ENCODE measurements at regions of chr19 and their contacts with region 1.

Region 1: DNA sequence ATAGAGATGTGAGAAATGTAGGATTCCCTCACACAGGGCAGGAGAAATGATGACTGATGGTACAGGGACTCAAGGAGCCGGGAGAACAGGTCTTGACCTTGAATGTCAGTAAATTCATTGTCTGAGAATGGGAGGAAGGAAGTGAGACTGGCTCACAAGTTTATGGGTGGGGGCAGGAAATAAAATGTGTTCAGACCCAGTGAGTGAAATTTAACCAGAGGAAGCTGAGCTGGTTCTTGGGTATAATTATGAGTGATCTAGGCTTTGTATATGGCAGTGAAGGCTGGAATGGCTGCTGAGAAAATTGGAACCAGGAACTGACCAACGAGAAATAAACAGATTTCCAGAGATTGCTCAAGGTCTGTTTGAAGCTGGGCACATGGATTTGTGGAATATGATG is 6.3 kb upstream of the IGSF23 start:
- DNase-seq: no peak
- ATAC-seq: no peak
- H3K4me3 ChIP-seq: no peak overlapping the region
- H3K27ac ChIP-seq: no peak overlapping the region
- H3K4me1 ChIP-seq: peaks cover 71% of the 10 kb centered on the region
- H3K27me3 ChIP-seq: no peaks in the 10 kb centered on the region
- CTCF ChIP-seq: no peak
- EP300 ChIP-seq: no peak
- POLR2A ChIP-seq: no peak
- RAD21 ChIP-seq: no peak

Region 2: GRCh38 chr19:44576843-44577565 is 30.0 kb before region 1 on chr19:
- CTCF ChIA-PET with region 1: interaction called, 4 read pairs
- POLR2A ChIA-PET with region 1: no interaction called
- in situ Hi-C with region 1: no loop called
- intact Hi-C with region 1: loop called (anchors 5 kb)
- DNase-seq: peak; percentile 65
- ATAC-seq: peak; percentile 87
- H3K4me3 ChIP-seq: no peak overlapping the region
- H3K27ac ChIP-seq: no peak overlapping the region
- H3K4me1 ChIP-seq: peaks cover 28% of the 10 kb centered on the region
- H3K27me3 ChIP-seq: no peaks in the 10 kb centered on the region
- CTCF ChIP-seq: peak; percentile 90
- EP300 ChIP-seq: no peak
- POLR2A ChIP-seq: no peak
- RAD21 ChIP-seq: peak; percentile 82

Region 3: GRCh38 chr19:44592441-44592890 is 14.6 kb before region 1 on chr19:
- CTCF ChIA-PET with region 1: no interaction called
- POLR2A ChIA-PET with region 1: interaction called, 35 read pairs
- in situ Hi-C with region 1: no loop called
- intact Hi-C with region 1: no loop called
- DNase-seq: no peak
- ATAC-seq: no peak
- H3K4me3 ChIP-seq: no peak overlapping the region
- H3K27ac ChIP-seq: no peak overlapping the region
- H3K4me1 ChIP-seq: peaks cover 77% of the 10 kb centered on the region
- H3K27me3 ChIP-seq: no peaks in the 10 kb centered on the region; a peak in 1 of 5 replicates
- CTCF ChIP-seq: no peak
- EP300 ChIP-seq: no peak
- POLR2A ChIP-seq: no peak
- RAD21 ChIP-seq: no peak

Region 4: DNA sequence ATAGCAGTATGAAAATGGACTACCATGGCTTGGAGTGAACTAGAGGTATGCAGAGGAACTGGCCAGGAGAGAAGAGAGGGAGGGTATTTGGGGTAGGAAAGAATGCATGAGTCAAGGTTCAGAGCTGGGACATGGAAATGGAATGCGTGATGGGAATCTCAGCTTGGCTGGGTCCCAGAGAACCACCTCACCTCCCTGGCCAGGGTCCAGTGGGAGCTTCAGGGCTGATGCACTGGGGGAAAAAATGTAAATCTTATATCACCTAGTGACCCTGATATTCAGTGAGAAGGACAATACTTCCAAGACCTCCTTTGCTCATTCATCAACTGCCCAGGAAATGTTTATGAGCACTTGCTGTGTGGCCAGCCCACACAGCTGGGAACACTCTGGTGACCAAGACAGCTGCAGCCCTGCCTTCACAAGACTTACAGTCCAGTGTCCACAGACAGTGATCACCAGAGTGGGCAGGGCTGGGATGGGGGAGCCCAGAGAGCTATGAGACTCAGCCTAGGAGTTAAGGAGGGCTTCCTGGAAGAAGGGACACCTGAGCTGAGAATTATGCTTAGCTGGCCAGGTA is 19.1 kb after region 1 on chr19:
- CTCF ChIA-PET with region 1: no interaction called
- POLR2A ChIA-PET with region 1: interaction called, 87 read pairs
- in situ Hi-C with region 1: no loop called
- intact Hi-C with region 1: no loop called
- DNase-seq: peak; percentile 89
- ATAC-seq: peak; percentile 83
- H3K4me3 ChIP-seq: no peak overlapping the region
- H3K27ac ChIP-seq: peak overlapping the region; percentile 69
- H3K4me1 ChIP-seq: peaks cover 57% of the 10 kb centered on the region
- H3K27me3 ChIP-seq: no peaks in the 10 kb centered on the region
- CTCF ChIP-seq: no peak
- EP300 ChIP-seq: no peak
- POLR2A ChIP-seq: no peak
- RAD21 ChIP-seq: no peak

Region 5: DNA sequence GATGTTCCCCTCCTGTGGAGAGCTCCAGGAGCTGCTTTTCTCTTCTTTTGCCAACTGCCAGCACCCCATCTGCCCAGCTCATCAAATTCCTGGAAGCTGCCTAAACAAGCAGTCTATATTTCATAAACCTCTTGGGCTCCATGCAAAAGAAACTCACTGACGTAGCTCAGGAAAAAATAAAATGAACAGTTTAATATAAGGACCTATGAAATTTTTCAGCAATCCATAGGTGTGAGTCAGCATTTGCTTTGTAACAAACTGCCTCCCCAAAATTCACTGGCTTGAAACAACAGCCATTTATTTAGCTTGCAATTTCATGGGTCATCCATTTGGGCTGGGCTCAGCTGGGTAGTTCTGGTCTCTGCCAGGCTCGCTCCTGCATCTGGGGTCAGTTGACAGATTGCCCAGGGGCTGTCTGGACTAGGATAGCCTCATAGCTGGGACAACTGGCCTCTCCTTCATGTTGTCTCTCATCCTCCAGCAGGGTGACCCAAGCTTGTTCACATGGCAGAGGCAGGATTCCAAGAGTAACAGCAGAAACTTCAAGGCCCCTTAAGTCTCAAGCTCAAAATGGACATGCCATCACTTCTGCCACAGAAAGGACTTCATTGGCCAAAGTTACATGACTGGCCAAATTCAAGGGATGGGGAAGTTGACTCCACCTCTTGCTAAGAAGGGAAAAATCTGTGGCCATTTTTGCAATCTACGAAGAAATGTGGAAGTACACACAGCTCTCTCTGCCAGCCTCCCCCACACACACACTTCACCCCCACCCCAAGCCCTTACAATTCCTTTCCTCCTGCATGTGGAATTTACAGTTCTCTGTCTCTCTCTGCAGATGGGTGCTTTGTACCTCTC is 28.8 kb after region 1 on chr19:
- CTCF ChIA-PET with region 1: no interaction called
- POLR2A ChIA-PET with region 1: interaction called, 8 read pairs
- in situ Hi-C with region 1: no loop called
- intact Hi-C with region 1: loop called (anchors 2 kb)
- DNase-seq: no peak
- ATAC-seq: peak; percentile 29; the same call in 2 of the 3 replicates
- H3K4me3 ChIP-seq: no peak overlapping the region
- H3K27ac ChIP-seq: peak overlapping the region; percentile 72
- H3K4me1 ChIP-seq: peaks cover 59% of the 10 kb centered on the region
- H3K27me3 ChIP-seq: no peaks in the 10 kb centered on the region
- CTCF ChIP-seq: no peak
- EP300 ChIP-seq: no peak
- POLR2A ChIP-seq: no peak
- RAD21 ChIP-seq: no peak

Region 6: DNA sequence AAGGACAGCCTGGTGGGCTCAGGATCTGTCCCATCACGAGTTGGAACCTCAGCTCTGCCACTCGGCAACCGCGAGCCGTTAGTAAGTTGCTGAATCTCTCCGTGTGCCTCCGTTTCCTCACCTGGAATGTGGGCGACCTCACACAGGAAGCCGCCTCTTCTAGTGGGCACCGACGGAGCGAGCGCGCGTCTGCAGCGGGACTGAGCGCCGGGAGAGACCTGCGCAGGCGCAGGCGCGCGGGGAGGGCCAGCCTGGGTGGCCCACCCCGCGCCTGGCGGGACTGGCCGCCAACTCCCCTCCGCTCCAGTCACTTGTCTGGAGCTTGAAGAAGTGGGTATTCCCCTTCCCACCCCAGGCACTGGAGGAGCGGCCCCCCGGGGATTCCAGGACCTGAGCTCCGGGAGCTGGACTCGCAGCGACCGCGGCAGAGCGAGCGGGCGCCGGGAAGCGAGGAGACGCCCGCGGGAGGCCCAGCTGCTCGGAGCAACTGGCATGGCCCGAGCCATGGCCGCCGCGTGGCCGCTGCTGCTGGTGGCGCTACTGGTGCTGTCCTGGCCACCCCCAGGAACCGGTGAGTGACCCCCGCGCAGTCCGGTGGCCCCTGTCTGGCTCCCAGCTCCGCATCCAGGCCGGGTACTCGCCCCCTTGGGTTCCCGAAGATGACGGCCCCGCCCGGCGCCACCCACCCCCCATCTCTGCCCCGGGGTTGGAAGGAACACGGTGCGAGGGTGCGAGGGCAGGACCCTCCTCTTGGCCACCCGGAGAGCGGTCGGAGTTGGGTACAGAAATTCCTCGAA is 36.8 kb after region 1 on chr19 and contains the start of gene PVR:
- CTCF ChIA-PET with region 1: no interaction called
- POLR2A ChIA-PET with region 1: interaction called, 36 read pairs
- in situ Hi-C with region 1: no loop called
- intact Hi-C with region 1: no loop called
- DNase-seq: peak; percentile 50
- ATAC-seq: peak; percentile 92
- H3K4me3 ChIP-seq: peak within 1 kb of the TSS; percentile 74 to 81 (median 79)
- H3K27ac ChIP-seq: peak within 1 kb of the TSS; percentile 82
- H3K4me1 ChIP-seq: peaks cover 60% of the 10 kb centered on the region
- H3K27me3 ChIP-seq: no peaks in the 10 kb centered on the region; a peak in 1 of 5 replicates
- CTCF ChIP-seq: peak; percentile 35
- EP300 ChIP-seq: no peak
- POLR2A ChIP-seq: peak; percentile 73 to 85
- RAD21 ChIP-seq: peak; percentile 64; the same call in 1 of the 2 replicates
- total RNA-seq, gene PVR: 18.4 and 43.4 TPM in 2 replicates

Region 7: DNA sequence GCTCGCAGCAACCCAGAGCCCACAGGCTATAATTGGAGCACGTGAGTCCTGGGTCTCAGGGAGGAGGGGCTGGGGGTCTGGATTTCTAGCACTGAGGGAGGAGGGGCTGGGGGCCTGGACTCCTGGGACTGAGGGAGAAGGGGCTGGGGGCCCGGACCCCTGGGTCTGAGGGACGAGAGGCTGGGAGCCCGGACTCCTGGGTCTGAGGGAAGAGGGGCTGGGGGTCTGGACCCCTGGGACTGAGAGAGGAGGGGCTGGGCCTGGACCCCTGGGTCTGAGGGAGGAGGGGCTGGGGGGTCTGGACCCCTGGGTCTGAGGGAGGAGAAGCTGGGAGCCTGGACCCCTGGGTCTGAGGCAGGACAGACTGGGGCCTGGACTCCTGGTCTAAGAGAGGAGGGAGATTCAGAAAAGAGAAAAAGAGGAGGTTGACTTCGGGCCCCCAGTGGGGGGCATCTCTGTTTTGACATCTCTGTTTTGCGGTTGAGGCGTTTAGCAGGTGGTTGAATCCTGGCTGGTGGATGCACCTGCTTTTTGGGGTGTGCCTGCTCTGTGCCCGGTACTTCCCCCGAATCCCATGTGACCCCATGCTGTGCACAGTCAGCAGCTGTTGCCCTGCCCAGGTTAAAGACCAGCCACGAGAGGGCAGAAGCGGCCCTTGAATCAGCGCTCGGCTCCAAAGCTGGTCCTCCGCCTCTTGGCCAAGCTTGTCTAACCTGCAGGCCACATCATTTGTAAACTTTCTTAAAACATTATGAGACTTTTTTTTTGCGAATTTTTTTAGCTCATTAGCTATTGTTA is 47.1 kb after region 1 on chr19:
- CTCF ChIA-PET with region 1: interaction called, 21 read pairs
- POLR2A ChIA-PET with region 1: interaction called, 8 read pairs
- in situ Hi-C with region 1: loop called (anchors 5 kb)
- intact Hi-C with region 1: loop called (anchors 1 kb)
- DNase-seq: peak; percentile 36
- ATAC-seq: peak; percentile 75
- H3K4me3 ChIP-seq: no peak overlapping the region
- H3K27ac ChIP-seq: no peak overlapping the region
- H3K4me1 ChIP-seq: no peaks in the 10 kb centered on the region
- H3K27me3 ChIP-seq: no peaks in the 10 kb centered on the region
- CTCF ChIP-seq: peak; percentile 80
- EP300 ChIP-seq: no peak
- POLR2A ChIP-seq: no peak
- RAD21 ChIP-seq: peak; percentile 50; the same call in 1 of the 2 replicates

Measured in HepG2 (cell line).